ENCODE measurements at regions of chr16 and their contacts with region 1.

Region 1: GRCh38 chr16:58345574-58346354 is 46.5 kb upstream of the GINS3 start:
- DNase-seq: no peak
- ATAC-seq: no peak
- H3K4me3 ChIP-seq: no peak overlapping the region
- H3K27ac ChIP-seq: peak overlapping the region in 7 of 10 donors; percentile 35 to 75 (median 67)
- H3K4me1 ChIP-seq: peaks cover 5 to 44% (median 16%) of the 10 kb centered on the region in 9 donors
- H3K27me3 ChIP-seq: no peaks in the 10 kb centered on the region
- CTCF ChIP-seq: peak in 8 of 9 donors; percentile 10 to 58 (median 36)

Region 2: DNA sequence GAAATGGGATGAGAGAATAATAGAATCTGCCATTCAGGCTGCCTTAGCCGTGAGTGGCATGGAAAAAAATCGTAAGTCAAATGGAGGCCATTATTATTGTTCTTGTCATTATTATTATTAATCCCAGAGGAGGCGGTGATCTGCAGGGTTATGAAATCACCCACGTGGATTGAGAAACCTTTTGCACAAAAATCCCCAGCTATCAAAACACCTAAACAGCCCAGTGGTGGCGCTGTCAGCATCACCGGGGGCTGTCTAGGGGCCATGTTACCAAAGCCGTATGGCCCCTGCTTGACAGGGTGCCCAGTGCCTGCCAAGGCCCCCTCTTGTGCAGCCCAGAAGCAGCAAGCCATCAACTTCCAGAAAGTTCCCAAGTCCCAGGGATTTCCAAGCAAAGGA is 400.0 kb before region 1 on chr16:
- intact Hi-C with region 1: no loop called
- DNase-seq: no peak
- ATAC-seq: no peak
- H3K4me3 ChIP-seq: no peak overlapping the region
- H3K27ac ChIP-seq: no peak overlapping the region
- H3K4me1 ChIP-seq: peaks cover 0 to 12% (median 4%) of the 10 kb centered on the region in 9 donors
- H3K27me3 ChIP-seq: peaks cover 0 to 13% (median 0%) of the 10 kb centered on the region in 7 donors
- CTCF ChIP-seq: no peak

Region 3: GRCh38 chr16:58392215-58393137 is 46.7 kb after region 1 on chr16 and contains the start of gene GINS3:
- intact Hi-C with region 1: loop called in 3 of 10 experiments (anchors 5 to 10 kb)
- DNase-seq: peak; percentile 85 to 95
- ATAC-seq: peak; percentile 97 to 99 (median 98)
- H3K4me3 ChIP-seq: peak within 1 kb of the TSS; percentile 61 to 100 (median 78)
- H3K27ac ChIP-seq: peak within 1 kb of the TSS; percentile 44 to 89 (median 84)
- H3K4me1 ChIP-seq: peaks cover 0 to 20% (median 12%) of the 10 kb centered on the region in 9 donors
- H3K27me3 ChIP-seq: peaks cover 0 to 4% (median 0%) of the 10 kb centered on the region in 7 donors
- CTCF ChIP-seq: peak in 2 of 9 donors; percentile 7 to 10
- total RNA-seq, gene GINS3: 4.0 to 8.8 (median 5.5) TPM

Region 4: GRCh38 chr16:58409316-58409973 is 63.7 kb after region 1 on chr16:
- intact Hi-C with region 1: loop called in 3 of 10 experiments (anchors 5 to 10 kb)
- DNase-seq: peak; percentile 42 to 61
- ATAC-seq: peak; percentile 44 to 78 (median 72)
- H3K4me3 ChIP-seq: no peak overlapping the region
- H3K27ac ChIP-seq: peak overlapping the region; percentile 14 to 95 (median 78)
- H3K4me1 ChIP-seq: peaks cover 6 to 52% (median 18%) of the 10 kb centered on the region in 9 donors
- H3K27me3 ChIP-seq: no peaks in the 10 kb centered on the region
- CTCF ChIP-seq: no peak

Region 5: DNA sequence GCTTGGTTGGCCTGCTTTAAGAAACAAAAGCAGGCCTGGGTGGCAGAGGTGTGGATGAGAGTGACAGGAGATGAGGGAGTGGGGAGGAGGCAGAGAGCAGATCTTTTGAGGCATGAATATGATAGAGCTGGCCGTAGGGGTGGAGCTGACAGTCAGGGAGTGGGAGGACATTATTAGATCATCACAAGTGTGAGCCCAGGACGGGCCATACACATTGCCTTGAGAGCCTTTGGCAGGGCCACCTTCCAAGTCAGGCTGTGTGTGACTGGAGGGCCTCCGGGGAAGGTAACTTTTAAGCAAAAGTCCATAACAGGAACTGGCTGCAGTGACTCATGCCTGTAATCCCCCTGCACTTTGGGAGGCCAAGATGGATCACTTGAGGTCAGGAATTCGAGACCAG is 72.8 kb after region 1 on chr16:
- intact Hi-C with region 1: loop called in 3 of 10 experiments (anchors 5 to 10 kb)
- DNase-seq: peak; percentile 64 to 76
- ATAC-seq: peak; percentile 73 to 87 (median 85)
- H3K4me3 ChIP-seq: no peak overlapping the region
- H3K27ac ChIP-seq: peak overlapping the region; percentile 73 to 95 (median 92)
- H3K4me1 ChIP-seq: peaks cover 0 to 59% (median 18%) of the 10 kb centered on the region in 9 donors
- H3K27me3 ChIP-seq: peaks cover 0 to 6% (median 0%) of the 10 kb centered on the region in 7 donors
- CTCF ChIP-seq: no peak

Region 6: DNA sequence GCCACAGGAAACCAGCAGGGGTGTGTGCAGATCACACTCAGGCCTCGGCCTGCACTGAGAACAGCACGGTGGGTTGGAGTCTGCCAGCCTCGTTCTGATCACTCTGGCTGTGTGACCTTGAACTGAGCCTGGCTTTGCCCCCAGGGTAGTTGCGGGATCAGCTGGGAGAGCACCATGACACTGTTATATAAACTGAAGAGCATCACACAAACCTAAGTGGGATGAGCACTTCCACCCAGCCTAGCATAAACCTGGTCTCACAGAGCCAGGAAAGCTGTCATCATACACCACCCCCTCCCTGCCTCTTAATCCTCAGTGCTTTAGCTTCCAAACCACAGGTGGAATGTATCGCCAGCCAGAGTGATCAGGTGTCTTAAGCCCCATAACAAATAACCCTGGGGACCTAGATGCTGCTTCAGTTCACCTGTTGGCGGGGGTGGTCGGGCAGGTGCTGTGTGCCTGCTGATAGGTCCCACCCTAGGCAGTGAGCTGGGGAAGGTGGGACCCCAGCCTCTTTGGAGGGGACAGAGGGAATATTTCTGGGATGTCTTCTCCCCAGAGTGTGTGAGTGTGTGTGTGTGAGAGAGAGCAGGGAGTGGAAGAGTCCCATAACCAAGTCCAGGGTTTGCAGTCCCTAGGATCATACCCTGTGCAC is 125.7 kb after region 1 on chr16:
- intact Hi-C with region 1: loop called in 1 of 10 experiments (anchors 5 kb)
- DNase-seq: no peak
- ATAC-seq: peak; percentile 14 to 61 (median 32)
- H3K4me3 ChIP-seq: no peak overlapping the region
- H3K27ac ChIP-seq: peak overlapping the region in 9 of 10 donors; percentile 30 to 89 (median 72)
- H3K4me1 ChIP-seq: peaks cover 14 to 100% (median 88%) of the 10 kb centered on the region in 9 donors
- H3K27me3 ChIP-seq: peaks cover 0 to 22% (median under 1%) of the 10 kb centered on the region in 7 donors
- CTCF ChIP-seq: no peak